Activated CD4-positive, alpha-beta T cell treated with anti-CD3 and anti-CD28 coated beads for 36 hours (primary cell): ENCODE measurements at regions of chr1 and their contacts with region 1.

Region 1: GRCh38 chr1:179882243-179883039 is at the start of gene TOR1AIP1:
- DNase-seq: peak; percentile 98
- ATAC-seq: peak; percentile 80
- H3K4me3 Mint-ChIP-seq: peak within 1 kb of the TSS; percentile 87
- H3K27ac Mint-ChIP-seq: peak within 1 kb of the TSS; percentile 98
- H3K4me1 Mint-ChIP-seq: peaks cover 59% of the 10 kb centered on the region
- H3K27me3 Mint-ChIP-seq: no peaks in the 10 kb centered on the region
- total RNA-seq, gene TOR1AIP1: 50.1 to 71.6 TPM

Region 2: DNA sequence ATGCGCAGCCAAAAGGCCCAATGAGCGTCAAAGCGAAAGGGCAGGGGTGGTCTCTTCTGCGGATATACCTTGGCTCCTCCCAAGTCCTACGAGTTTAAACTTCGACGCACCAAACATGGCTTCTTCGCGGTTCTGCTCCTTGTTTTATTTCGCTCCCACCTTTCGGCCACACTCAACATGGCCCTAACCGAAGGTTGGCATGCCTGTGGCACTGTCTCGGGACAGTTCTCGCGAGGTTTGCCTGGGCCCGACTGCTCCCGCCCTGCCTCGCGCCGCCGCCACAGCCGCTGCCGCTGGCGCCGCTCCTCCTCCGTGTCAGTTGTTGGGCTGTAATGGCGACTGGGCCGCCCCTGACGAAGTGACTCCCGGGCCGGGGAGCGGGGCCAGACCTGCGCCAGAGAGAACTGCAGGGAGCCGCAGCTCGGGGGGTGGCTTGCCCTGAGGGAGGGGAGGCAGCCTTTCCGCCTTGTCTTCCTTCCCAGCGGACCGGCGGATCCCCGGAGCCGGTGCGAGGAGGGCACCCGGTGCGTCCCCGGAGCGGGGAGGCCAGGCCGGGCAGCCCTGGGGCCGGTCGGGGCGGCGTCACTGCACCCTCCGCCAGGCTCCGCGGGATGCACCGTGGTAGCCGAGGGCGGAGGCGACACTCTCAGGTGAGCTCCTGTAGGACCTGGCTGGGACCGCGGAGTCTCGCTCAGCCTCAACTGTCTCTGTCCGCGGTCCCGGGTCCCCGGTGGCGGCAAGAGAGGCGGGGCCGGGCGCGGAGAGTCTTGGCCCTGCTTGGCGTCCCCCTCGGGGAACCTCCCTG is 72.3 kb after region 1 on chr1 and contains the start of gene CEP350:
- CTCF ChIA-PET with region 1: interaction called, 8 read pairs
- POLR2A ChIA-PET with region 1: interaction called, 8 read pairs
- intact Hi-C with region 1: loop called (anchors 1 kb)
- DNase-seq: peak; percentile 99
- ATAC-seq: peak; percentile 94
- H3K4me3 Mint-ChIP-seq: peak within 1 kb of the TSS; percentile 82
- H3K27ac Mint-ChIP-seq: peak within 1 kb of the TSS; percentile 98
- H3K4me1 Mint-ChIP-seq: peaks cover 47% of the 10 kb centered on the region
- H3K27me3 Mint-ChIP-seq: no peaks in the 10 kb centered on the region
- total RNA-seq, gene CEP350: 38.2 to 42.1 TPM